AG04449 (cell line): ENCODE measurements at regions of chr4 and their contacts with region 1.

Region 1: DNA sequence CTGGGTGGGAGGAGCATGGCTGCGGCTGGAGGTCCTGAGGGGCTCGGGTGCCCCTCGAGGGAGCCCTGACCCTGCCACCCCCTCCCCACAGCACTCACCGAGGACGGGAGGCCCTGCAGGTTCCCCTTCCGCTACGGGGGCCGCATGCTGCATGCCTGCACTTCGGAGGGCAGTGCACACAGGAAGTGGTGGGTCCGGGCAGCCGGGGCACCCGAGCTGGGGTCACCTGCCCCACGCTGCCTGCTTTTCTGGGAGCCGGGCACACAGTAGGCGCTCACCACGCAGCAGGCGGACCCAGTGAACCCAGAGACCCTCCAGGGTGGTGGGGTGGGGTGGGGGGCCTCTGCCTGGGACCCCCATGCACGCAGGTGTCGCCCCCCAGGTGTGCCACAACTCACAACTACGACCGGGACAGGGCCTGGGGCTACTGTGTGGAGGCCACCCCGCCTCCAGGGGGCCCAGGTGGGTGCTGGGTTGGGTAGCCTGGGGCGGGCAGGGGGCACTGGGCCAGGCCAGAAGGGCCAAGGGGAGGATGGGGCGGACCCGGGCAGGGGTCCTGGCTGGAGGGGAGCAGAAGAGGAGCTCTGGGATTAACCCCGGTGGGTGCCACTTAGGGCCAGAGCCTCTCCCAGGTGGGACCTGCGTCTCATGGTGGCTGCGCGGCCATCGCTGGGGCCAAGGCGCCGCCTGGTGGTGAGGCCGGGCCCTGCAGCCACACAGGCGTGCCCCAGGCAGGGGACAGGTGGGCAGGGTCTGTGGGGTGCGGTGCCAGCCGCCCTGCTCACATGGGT is 1.4 kb downstream of the HGFAC start:
- DNase-seq: no peak
- H3K4me3 ChIP-seq: no peak overlapping the region
- CTCF ChIP-seq: peak; percentile 100

Region 2: DNA sequence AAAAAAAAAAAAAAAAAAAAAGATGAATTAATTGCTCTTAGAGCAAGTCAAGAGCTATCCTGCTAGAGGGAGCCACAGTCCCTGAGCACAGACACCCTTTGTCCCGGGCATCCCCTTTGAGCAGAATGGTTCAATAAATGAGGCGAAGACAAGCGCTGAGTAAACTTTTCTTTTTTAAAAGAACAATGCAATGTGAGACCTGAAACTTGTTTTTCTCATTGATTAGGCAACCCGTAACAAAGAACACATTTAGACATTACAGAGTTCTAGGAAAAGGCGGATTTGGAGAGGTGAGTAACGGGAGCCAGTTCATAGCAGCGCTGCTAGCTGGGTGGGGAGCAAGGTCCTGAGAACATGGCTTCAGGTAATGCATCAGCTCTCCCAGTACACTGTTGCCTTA is 433.7 kb before region 1 on chr4:
- CTCF ChIA-PET with region 1: no interaction called
- POLR2A ChIA-PET with region 1: no interaction called
- DNase-seq: no peak
- H3K4me3 ChIP-seq: no peak overlapping the region
- CTCF ChIP-seq: no peak

Region 3: DNA sequence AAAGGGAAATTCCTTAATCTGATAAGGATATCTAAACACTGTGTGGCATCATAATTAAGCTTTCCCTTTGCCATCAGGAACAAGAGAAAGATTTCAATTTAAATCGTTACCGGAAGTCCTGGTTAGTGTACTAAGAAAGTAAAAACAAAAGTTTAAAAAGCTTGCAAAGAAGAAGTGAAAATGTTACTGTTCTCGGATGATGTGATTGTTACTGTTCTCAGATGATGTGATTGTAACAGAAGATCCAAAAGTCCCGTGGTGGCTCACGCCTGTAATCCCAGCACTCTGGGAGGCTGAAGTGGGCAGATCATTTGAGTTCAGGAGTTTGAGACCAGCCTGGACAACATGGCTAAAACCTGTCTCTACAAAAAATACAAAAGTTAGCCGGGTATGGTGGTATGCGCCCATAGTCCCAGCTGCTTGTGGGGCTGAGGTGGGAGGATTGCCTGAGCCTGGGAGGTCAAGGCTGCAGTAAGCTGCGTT is 87.8 kb before region 1 on chr4:
- CTCF ChIA-PET with region 1: interaction called, 19 read pairs
- POLR2A ChIA-PET with region 1: no interaction called
- DNase-seq: no peak
- H3K4me3 ChIP-seq: no peak overlapping the region
- CTCF ChIP-seq: no peak

Region 4: DNA sequence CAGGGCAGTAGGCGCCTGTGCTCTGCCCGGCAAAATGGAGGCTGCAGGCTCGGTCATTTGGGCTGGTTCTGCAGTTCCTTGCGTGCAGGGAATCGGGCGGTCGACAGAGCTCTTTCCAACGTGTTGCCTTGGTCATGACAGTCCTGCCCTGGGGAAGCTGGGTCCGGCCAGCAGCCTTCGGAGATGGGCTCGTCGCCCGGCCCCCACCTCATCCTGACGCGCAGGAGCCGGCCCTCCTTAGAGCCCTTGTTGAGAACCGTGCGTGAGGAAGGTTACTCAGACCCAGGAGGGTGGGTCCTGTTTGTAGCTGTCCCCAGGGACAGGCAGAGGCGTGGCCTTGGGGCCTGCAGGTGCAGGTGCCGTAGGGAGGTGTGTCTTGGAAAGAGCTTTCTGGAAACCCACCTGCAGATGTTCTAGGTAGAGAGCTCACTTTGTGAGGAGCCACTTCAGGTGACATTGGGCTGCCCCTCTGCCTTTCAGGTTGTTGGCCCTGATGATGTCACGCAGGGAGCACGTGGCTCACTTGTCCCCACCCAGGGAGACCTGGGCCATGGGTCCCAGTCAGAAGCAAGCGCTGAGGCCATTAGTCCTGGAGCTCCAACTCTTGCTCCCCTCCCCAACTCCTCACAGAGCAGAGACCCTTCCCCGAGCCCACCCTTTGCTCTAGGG is 16.6 kb before region 1 on chr4:
- CTCF ChIA-PET with region 1: interaction called, 13 read pairs
- POLR2A ChIA-PET with region 1: no interaction called
- DNase-seq: no peak
- H3K4me3 ChIP-seq: no peak overlapping the region
- CTCF ChIP-seq: no peak